CD8-positive, alpha-beta memory T cell (primary cell): ENCODE measurements at regions of chr2 and their contacts with region 1.

Region 1: GRCh38 chr2:233251306-233252116 is at the start of gene ATG16L1:
- DNase-seq: peak; percentile 94 to 96 (median 94)
- H3K4me3 ChIP-seq: peak within 1 kb of the TSS; percentile 94
- H3K4me3 Mint-ChIP-seq: peak within 1 kb of the TSS; percentile 90 to 96 (median 93)
- H3K27ac ChIP-seq: peak within 1 kb of the TSS; percentile 78
- H3K27ac Mint-ChIP-seq: peak within 1 kb of the TSS; percentile 86 to 99 (median 98)
- H3K4me1 ChIP-seq: peaks cover 78% of the 10 kb centered on the region
- H3K4me1 Mint-ChIP-seq: peaks cover 59 to 79% (median 75%) of the 10 kb centered on the region in 3 donors
- H3K27me3 ChIP-seq: no peaks in the 10 kb centered on the region
- H3K27me3 Mint-ChIP-seq: peaks cover 0 to 2% of the 10 kb centered on the region in 2 donors
- total RNA-seq, gene ATG16L1: 32.0 to 34.2 TPM

Region 2: DNA sequence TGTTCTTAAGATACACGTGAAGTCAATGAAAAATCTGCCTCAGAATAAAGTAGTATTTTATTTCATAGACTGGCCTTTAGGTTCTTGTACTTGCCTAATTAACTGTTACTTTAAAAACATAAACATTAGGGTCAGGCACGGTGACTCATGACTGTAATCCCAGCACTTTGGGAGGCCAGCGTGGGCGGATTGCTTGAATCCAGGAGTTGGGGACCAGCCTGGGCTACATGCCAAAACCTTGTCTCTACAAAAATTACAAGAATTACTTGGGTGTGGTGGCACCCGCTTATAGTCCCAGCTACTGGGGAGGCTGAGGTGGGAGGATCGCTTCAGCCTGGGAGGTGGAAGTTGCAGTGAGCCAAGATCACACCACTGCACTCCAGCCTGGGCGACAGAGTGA is 397.4 kb before region 1 on chr2:
- CTCF ChIA-PET with region 1: interaction called, 11 read pairs
- POLR2A ChIA-PET with region 1: no interaction called
- DNase-seq: no peak
- H3K4me3 ChIP-seq: no peak overlapping the region
- H3K4me3 Mint-ChIP-seq: no peak overlapping the region
- H3K27ac ChIP-seq: no peak overlapping the region
- H3K27ac Mint-ChIP-seq: no peak overlapping the region
- H3K4me1 ChIP-seq: no peaks in the 10 kb centered on the region
- H3K4me1 Mint-ChIP-seq: peaks cover 0 to 3% (median 0%) of the 10 kb centered on the region in 3 donors
- H3K27me3 ChIP-seq: no peaks in the 10 kb centered on the region
- H3K27me3 Mint-ChIP-seq: no peaks in the 10 kb centered on the region

Region 3: DNA sequence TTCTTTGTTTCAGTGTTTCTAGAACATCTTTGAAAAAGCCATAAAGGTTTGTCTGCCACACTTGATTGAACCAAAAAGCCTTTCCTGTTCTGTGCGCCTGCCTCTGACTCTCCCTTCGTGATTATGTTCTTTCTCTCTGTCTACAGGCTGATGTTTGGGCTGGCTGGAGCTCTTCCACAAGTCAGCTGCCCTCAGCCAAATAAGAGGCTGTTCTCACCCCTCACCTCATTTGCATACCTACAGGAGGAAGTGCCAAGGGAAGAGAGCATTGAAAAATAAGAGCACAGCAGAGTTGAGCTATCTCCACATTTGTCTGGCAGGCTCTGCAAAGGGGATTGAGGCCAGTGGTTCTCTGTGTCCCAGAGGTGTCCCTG is 175.6 kb before region 1 on chr2:
- CTCF ChIA-PET with region 1: interaction called, 3 read pairs
- POLR2A ChIA-PET with region 1: interaction called, 10 read pairs
- DNase-seq: peak in 3 of 5 donors; percentile 49 to 68 (median 66)
- H3K4me3 ChIP-seq: peak overlapping the region; percentile 60
- H3K4me3 Mint-ChIP-seq: no peak overlapping the region
- H3K27ac ChIP-seq: peak overlapping the region; percentile 38
- H3K27ac Mint-ChIP-seq: no peak overlapping the region
- H3K4me1 ChIP-seq: peaks cover 84% of the 10 kb centered on the region
- H3K4me1 Mint-ChIP-seq: peaks cover 35 to 51% (median 45%) of the 10 kb centered on the region in 3 donors
- H3K27me3 ChIP-seq: no peaks in the 10 kb centered on the region
- H3K27me3 Mint-ChIP-seq: no peaks in the 10 kb centered on the region

Region 4: GRCh38 chr2:233234264-233234663 is 17.2 kb before region 1 on chr2:
- CTCF ChIA-PET with region 1: interaction called, 26 read pairs
- POLR2A ChIA-PET with region 1: no interaction called
- DNase-seq: no peak
- H3K4me3 ChIP-seq: no peak overlapping the region
- H3K4me3 Mint-ChIP-seq: peak overlapping the region in 4 of 7 donors; percentile 28 to 79 (median 54)
- H3K27ac ChIP-seq: no peak overlapping the region
- H3K27ac Mint-ChIP-seq: peak overlapping the region in 6 of 8 donors; percentile 11 to 86 (median 58)
- H3K4me1 ChIP-seq: peaks cover 31% of the 10 kb centered on the region
- H3K4me1 Mint-ChIP-seq: peaks cover 46 to 51% (median 50%) of the 10 kb centered on the region in 3 donors
- H3K27me3 ChIP-seq: no peaks in the 10 kb centered on the region
- H3K27me3 Mint-ChIP-seq: no peaks in the 10 kb centered on the region

Region 5: DNA sequence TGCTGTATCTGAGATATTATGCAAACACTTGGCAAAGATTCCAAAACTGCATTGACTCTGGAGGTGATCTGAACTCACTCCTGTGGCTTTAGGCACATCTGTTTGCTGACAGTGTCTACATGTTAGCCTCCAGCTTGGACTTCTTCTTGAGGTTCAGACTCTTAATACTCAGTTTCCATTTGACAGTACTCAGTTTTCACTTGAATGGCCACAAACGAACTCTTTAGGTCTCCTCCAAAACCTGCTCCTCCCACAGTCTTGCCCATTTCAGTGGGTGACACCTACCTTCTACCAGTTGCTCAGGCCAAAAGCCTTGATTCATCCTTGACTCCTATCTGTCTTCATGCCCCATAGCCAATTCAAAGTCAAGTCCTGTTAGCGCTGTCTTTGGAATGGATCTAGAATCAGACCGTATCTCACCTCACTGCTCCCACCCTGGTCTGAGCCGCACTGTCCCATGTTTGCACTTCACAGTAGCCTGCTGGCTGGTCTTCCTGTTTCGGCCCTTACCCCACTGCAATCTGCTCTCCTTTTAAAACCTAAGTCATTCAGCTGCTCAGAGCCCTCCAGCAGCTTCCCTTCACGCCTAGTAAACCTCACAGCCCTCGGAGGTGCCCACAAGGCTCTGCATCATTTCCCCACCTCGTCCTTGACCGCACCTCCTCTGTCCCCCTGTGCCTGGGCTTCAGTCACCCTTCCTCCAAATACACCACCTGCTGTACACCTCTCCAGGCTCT is 10.5 kb after region 1 on chr2:
- CTCF ChIA-PET with region 1: interaction called, 25 read pairs
- POLR2A ChIA-PET with region 1: interaction called, 5 read pairs
- DNase-seq: no peak
- H3K4me3 ChIP-seq: no peak overlapping the region
- H3K4me3 Mint-ChIP-seq: peak overlapping the region in 6 of 7 donors; percentile 27 to 65 (median 63)
- H3K27ac ChIP-seq: peak overlapping the region; percentile 10
- H3K27ac Mint-ChIP-seq: peak overlapping the region; percentile 21 to 93 (median 88)
- H3K4me1 ChIP-seq: peaks cover 48% of the 10 kb centered on the region
- H3K4me1 Mint-ChIP-seq: peaks cover 67 to 76% (median 72%) of the 10 kb centered on the region in 3 donors
- H3K27me3 ChIP-seq: no peaks in the 10 kb centered on the region
- H3K27me3 Mint-ChIP-seq: no peaks in the 10 kb centered on the region

Region 6: GRCh38 chr2:233267516-233268245 is 16.2 kb after region 1 on chr2:
- CTCF ChIA-PET with region 1: interaction called, 25 read pairs
- POLR2A ChIA-PET with region 1: interaction called, 34 read pairs
- DNase-seq: peak; percentile 72 to 93 (median 92)
- H3K4me3 ChIP-seq: peak overlapping the region; percentile 42
- H3K4me3 Mint-ChIP-seq: peak overlapping the region; percentile 54 to 86 (median 78)
- H3K27ac ChIP-seq: peak overlapping the region; percentile 75
- H3K27ac Mint-ChIP-seq: peak overlapping the region; percentile 96 to 100 (median 98)
- H3K4me1 ChIP-seq: peaks cover 69% of the 10 kb centered on the region
- H3K4me1 Mint-ChIP-seq: peaks cover 71 to 80% (median 77%) of the 10 kb centered on the region in 3 donors
- H3K27me3 ChIP-seq: no peaks in the 10 kb centered on the region
- H3K27me3 Mint-ChIP-seq: no peaks in the 10 kb centered on the region

Region 7: DNA sequence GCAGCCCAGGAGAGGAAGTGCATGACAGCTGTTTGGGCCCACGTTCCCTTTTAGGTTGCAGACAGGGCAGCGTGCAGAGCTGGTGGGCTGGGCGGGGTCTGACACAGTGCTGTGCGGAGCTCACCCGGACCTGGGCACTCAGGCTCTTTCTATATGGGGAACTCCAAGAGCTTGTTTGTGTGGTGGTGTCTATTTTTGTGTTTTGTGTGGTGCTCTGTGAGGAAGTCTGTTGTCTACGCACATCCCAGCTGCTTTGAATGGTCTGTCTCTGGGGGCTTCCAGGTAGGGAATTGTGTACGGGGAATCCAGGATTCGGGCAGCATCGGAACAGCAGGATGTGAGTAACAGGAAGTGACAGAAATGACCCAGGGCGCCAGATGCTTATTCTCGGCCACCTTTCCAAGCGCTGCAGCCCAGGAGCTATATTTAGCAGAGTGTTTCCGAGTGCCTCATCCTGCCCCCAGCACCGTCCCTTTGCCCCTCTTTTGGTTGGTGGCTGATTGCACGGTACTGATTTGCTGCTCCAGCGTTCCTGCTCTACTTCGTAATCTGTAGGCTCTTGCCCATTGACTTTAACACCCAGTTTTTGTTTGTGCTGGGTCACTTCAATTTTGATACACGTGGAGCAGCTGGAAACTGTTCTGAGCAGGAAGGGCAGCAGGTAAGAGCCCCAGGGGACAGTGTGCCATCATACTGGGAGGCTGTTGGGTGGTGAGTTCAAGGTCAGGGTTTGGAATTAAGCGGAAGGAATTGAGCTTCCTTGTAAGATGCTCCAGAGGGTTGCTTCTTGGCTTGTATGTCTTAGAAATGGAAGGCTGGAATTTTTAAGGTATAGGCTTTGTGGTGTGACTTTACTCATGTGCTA is 167.5 kb after region 1 on chr2:
- CTCF ChIA-PET with region 1: no interaction called
- POLR2A ChIA-PET with region 1: no interaction called
- DNase-seq: peak; percentile 13 to 74 (median 44)
- H3K4me3 ChIP-seq: peak overlapping the region; percentile 73
- H3K4me3 Mint-ChIP-seq: peak overlapping the region; percentile 87 to 93 (median 88)
- H3K27ac ChIP-seq: no peak overlapping the region
- H3K27ac Mint-ChIP-seq: peak overlapping the region; percentile 67 to 98 (median 93)
- H3K4me1 ChIP-seq: peaks cover 97% of the 10 kb centered on the region
- H3K4me1 Mint-ChIP-seq: peaks cover 87 to 100% (median 96%) of the 10 kb centered on the region in 3 donors
- H3K27me3 ChIP-seq: no peaks in the 10 kb centered on the region
- H3K27me3 Mint-ChIP-seq: no peaks in the 10 kb centered on the region